H1 (cell line): ENCODE measurements at regions of chr1 and their contacts with region 1.

Region 1: GRCh38 chr1:206507284-206508129 is at the start of gene RASSF5:
- DNase-seq: peak; percentile 27 to 94
- H3K4me3 ChIP-seq: peak within 1 kb of the TSS; percentile 37 to 71 (median 64)
- H3K27ac ChIP-seq: no peak within 1 kb of the TSS
- H3K4me1 ChIP-seq: peaks cover 2 to 14% (median 6%) of the 10 kb centered on the region in 4 experiments; a peak in 6 of 7 replicates
- H3K27me3 ChIP-seq: peaks cover 17 to 49% (median 47%) of the 10 kb centered on the region in 4 experiments
- CTCF ChIP-seq: no peak
- EP300 ChIP-seq: no peak
- POLR2A ChIP-seq: peak; percentile 87 to 88
- RAD21 ChIP-seq: no peak
- total RNA-seq, gene RASSF5: 1.8 and 2.3 TPM in 2 replicates

Region 2: GRCh38 chr1:206419250-206419649 is 88.3 kb before region 1 on chr1:
- CTCF ChIA-PET with region 1: no interaction called
- POLR2A ChIA-PET with region 1: no interaction called
- DNase-seq: no peak
- H3K4me3 ChIP-seq: no peak overlapping the region
- H3K27ac ChIP-seq: no peak overlapping the region
- H3K4me1 ChIP-seq: no peaks in the 10 kb centered on the region
- H3K27me3 ChIP-seq: peaks cover 0 to 1% (median 0%) of the 10 kb centered on the region in 4 experiments; a peak in 1 of 7 replicates
- CTCF ChIP-seq: no peak
- EP300 ChIP-seq: no peak
- POLR2A ChIP-seq: no peak
- RAD21 ChIP-seq: no peak

Region 3: DNA sequence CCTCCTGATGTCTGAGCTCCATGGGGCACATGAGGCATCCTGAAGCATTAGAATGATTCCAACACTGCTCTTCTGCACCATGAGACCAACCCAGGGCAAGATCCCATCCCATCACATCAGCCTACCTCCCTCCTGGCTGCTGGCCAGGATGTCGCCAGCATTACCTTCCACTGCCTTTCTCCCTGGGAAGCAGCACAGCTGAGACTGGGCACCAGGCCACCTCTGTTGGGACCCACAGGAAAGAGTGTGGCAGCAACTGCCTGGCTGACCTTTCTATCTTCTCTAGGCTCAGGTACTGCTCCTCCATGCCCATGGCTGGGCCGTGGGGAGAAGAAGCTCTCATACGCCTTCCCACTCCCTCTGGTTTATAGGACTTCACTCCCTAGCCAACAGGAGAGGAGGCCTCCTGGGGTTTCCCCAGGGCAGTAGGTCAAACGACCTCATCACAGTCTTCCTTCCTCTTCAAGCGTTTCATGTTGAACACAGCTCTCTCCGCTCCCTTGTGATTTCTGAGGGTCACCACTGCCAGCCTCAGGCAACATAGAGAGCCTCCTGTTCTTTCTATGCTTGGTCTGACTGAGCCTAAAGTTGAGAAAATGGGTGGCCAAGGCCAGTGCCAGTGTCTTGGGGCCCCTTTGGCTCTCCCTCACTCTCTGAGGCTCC is 11.2 kb before region 1 on chr1:
- CTCF ChIA-PET with region 1: interaction called, 123 read pairs
- POLR2A ChIA-PET with region 1: interaction called, 23 read pairs
- DNase-seq: no peak
- H3K4me3 ChIP-seq: no peak overlapping the region
- H3K27ac ChIP-seq: no peak overlapping the region
- H3K4me1 ChIP-seq: 0 out of 7 replicates have a peak, but pooled peaks cover 0 to 3% (median 0%) of the 10 kb centered on the region in 4 experiments
- H3K27me3 ChIP-seq: no peaks in the 10 kb centered on the region
- CTCF ChIP-seq: no peak
- EP300 ChIP-seq: no peak
- POLR2A ChIP-seq: no peak
- RAD21 ChIP-seq: no peak

Region 4: GRCh38 chr1:206521143-206521542 is 13.6 kb after region 1 on chr1:
- CTCF ChIA-PET with region 1: interaction called, 14 read pairs
- POLR2A ChIA-PET with region 1: interaction called, 6 read pairs
- DNase-seq: no peak
- H3K4me3 ChIP-seq: no peak overlapping the region
- H3K27ac ChIP-seq: no peak overlapping the region
- H3K4me1 ChIP-seq: no peaks in the 10 kb centered on the region
- H3K27me3 ChIP-seq: no peaks in the 10 kb centered on the region
- CTCF ChIP-seq: no peak
- EP300 ChIP-seq: no peak
- POLR2A ChIP-seq: no peak
- RAD21 ChIP-seq: no peak

Region 5: DNA sequence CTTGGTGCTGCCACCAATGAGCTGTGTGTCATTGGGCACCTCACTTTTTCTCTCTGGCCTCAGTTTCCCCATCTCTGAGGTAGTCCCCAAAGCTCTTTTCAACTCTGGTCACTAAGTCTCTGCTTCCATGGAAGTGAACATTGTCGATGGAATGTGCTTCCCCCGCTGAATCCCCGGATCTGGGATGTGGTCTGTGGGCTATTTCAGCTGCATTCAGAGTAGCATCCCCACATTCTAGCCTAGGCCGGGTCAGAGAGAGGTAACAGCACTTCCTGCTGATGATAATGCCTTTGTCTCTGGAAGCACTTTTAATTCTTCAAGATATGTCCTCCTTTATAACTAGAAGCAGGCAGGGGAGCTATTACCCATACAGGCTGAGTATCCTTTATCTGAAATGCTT is 29.6 kb after region 1 on chr1:
- CTCF ChIA-PET with region 1: interaction called, 23 read pairs
- POLR2A ChIA-PET with region 1: interaction called, 6 read pairs
- DNase-seq: no peak
- H3K4me3 ChIP-seq: no peak overlapping the region
- H3K27ac ChIP-seq: no peak overlapping the region
- H3K4me1 ChIP-seq: no peaks in the 10 kb centered on the region; a peak in 2 of 7 replicates
- H3K27me3 ChIP-seq: no peaks in the 10 kb centered on the region
- CTCF ChIP-seq: no peak
- EP300 ChIP-seq: no peak
- POLR2A ChIP-seq: no peak
- RAD21 ChIP-seq: no peak

Region 6: DNA sequence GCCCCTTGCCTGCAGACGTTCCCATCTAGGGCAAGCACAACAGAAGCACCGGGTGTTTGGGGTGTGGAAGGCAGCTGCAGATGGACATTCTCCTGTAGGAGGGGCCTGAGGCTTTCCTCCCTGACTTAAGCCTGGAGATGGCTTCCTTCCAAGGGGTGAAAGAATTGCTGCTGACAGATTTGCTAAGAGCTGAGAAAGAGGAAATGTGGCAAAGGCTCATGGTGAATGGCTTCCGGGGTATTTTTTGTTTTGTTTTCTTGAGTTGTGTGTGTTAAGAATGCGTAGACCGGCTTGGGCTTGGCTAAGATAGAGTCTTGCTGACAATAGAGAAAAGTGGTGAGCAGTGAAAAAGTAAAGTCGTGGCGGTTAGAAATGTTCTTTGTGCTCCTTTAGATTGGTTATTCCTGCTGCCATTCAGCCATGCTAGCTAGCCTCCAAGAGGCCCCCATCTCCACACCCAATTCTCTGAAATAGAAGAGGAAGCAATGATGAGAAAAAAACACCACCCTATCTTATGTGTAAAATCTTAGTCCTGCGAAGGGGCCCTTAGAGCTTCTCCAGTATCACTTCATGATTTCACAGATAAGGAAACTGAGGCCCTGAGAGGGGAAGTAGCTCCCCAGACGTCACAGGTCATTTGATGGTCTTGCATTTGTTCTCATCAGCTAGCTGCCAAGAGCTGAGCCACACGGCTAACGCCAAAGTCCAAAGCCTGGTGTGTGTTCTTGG is 67.8 kb after region 1 on chr1:
- CTCF ChIA-PET with region 1: interaction called, 11 read pairs
- POLR2A ChIA-PET with region 1: interaction called, 4 read pairs
- DNase-seq: no peak
- H3K4me3 ChIP-seq: no peak overlapping the region
- H3K27ac ChIP-seq: no peak overlapping the region
- H3K4me1 ChIP-seq: no peaks in the 10 kb centered on the region
- H3K27me3 ChIP-seq: 0 out of 7 replicates have a peak, but pooled peaks cover 0 to 3% (median 0%) of the 10 kb centered on the region in 4 experiments
- CTCF ChIP-seq: no peak
- EP300 ChIP-seq: no peak
- POLR2A ChIP-seq: no peak
- RAD21 ChIP-seq: no peak

Region 7: DNA sequence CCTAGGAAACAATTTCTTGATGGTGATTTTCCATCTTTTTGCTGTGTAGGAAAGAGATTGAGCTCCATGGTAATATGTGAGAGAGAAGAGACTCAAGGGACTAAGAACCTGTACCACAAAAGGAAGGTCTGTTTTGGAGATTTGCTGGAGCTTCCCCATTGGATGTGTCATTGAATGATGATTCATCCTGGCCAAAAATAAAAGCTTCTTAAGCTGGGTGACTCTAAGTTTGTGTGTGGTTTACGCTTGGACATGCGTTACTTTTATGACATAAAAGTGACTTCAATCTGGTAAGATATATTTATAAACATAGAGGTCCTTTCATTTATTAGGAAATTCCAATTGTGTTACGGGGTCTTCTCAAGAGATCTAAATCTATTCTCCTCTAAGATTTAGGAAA is 245.6 kb after region 1 on chr1:
- CTCF ChIA-PET with region 1: no interaction called
- POLR2A ChIA-PET with region 1: no interaction called
- DNase-seq: no peak
- H3K4me3 ChIP-seq: no peak overlapping the region
- H3K27ac ChIP-seq: no peak overlapping the region
- H3K4me1 ChIP-seq: no peaks in the 10 kb centered on the region
- H3K27me3 ChIP-seq: peaks cover 2 to 7% (median 4%) of the 10 kb centered on the region in 4 experiments; a peak in 5 of 7 replicates
- CTCF ChIP-seq: no peak
- EP300 ChIP-seq: no peak
- POLR2A ChIP-seq: no peak
- RAD21 ChIP-seq: no peak